ENCODE measurements at regions of chr6 and their contacts with region 1.

Region 1: DNA sequence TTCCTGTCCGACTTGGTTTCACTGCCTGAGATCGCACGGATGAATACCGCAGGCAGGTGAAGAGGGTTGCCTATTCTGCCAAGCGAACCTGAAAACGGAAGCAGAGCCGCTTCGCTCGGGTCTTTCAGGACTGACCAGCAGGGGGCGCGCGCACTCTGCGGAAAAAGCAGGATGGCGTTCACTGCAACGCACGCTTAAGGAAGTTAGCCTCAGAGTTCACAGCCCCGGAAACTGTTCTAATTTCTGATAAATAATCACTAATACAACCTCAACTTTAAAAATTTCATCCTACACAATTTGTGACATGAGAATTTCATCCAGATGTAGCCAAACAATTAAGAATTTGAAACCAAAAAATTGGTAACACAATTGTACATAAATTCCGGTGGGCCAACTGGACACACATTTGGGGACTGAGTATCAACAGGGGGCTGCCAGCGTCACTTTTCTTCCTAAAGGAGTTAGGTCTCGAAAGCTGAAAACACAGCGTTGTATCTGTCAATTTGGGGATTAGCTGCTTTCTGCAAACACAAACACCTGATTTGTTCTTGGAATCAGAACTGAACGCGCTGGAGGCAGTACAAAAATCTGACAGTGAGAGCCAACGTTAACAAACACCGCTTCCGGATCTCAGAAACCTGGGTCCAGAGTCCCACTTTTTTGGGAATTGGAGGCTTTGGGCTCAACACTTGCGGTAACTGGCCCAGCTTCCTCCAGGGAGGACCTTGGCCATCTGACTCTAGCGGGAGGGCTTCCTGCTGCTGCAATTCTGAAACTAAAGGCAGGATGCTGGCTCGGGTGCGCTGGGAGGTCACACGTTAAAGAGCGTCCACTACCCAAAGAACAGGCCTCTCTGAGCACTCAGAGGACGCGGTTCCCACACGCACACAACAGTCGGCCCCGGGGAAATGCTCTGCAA is 8.8 kb downstream of the PXDC1 start:
- DNase-seq: peak; percentile 86 to 91
- ATAC-seq: peak; percentile 63 to 89 (median 82)
- H3K4me3 ChIP-seq: peak overlapping the region in 8 of 10 donors; percentile 2 to 39 (median 22)
- H3K27ac ChIP-seq: peak overlapping the region; percentile 66 to 88 (median 77)
- H3K4me1 ChIP-seq: peaks cover 36 to 99% (median 71%) of the 10 kb centered on the region in 9 donors
- H3K27me3 ChIP-seq: no peaks in the 10 kb centered on the region
- CTCF ChIP-seq: peak; percentile 88 to 98 (median 95)

Region 2: DNA sequence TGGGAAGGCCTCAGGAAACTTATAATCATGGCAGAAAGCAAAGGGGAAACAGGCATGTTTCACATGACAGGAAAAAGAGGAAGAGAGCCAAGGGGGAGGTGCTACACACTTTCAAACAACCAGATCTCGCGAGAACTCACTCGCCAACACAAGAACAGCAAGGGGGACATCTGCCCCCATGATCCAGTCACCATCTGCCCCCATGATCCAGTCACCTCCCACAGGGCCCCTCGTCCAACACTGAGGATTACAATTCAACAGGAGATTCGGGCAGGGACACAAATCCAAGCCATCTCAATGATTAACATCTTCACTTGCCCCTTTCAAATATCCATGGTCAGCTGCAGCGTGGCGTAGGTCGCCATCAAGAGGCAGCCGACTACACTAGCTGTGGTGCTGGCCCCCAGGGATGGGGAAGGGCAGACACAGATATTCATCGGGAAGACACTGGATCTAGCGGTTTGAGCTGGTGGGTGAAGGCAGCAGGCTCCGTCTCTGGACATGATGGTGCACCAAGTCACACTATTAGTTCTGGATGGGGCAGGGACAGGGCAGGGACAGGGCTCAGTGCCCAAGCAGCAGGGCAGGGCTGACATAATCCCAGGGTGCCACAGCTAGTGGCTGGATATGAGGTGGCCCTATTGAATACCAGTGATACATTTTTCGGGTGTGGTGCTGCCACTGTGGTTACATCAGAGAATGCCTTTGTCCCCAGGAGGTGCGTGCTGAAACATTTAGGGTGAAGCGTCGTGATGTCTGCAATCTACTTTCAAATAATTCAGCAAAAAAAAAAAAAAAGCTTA is 546.8 kb before region 1 on chr6:
- intact Hi-C with region 1: no loop called
- DNase-seq: no peak
- ATAC-seq: peak in 3 of 8 donors; percentile 13 to 35 (median 21)
- H3K4me3 ChIP-seq: no peak overlapping the region
- H3K27ac ChIP-seq: peak overlapping the region in 3 of 10 donors; percentile 69 to 90 (median 81)
- H3K4me1 ChIP-seq: peaks cover 0 to 17% (median 6%) of the 10 kb centered on the region in 9 donors
- H3K27me3 ChIP-seq: no peaks in the 10 kb centered on the region
- CTCF ChIP-seq: no peak

Region 3: GRCh38 chr6:3697609-3698008 is 45.1 kb before region 1 on chr6:
- intact Hi-C with region 1: no loop called
- DNase-seq: no peak
- ATAC-seq: peak in 1 of 8 donors; percentile 77
- H3K4me3 ChIP-seq: no peak overlapping the region
- H3K27ac ChIP-seq: no peak overlapping the region
- H3K4me1 ChIP-seq: no peaks in the 10 kb centered on the region
- H3K27me3 ChIP-seq: no peaks in the 10 kb centered on the region
- CTCF ChIP-seq: no peak

Region 4: GRCh38 chr6:3825851-3826581 is 83.3 kb after region 1 on chr6:
- intact Hi-C with region 1: loop called in 5 of 10 experiments (anchors 2 to 5 kb)
- DNase-seq: peak; percentile 86 to 87
- ATAC-seq: peak; percentile 84 to 95 (median 93)
- H3K4me3 ChIP-seq: peak overlapping the region in 6 of 10 donors; percentile 8 to 36 (median 20)
- H3K27ac ChIP-seq: peak overlapping the region; percentile 75 to 92 (median 90)
- H3K4me1 ChIP-seq: peaks cover 10 to 44% (median 38%) of the 10 kb centered on the region in 9 donors
- H3K27me3 ChIP-seq: no peaks in the 10 kb centered on the region
- CTCF ChIP-seq: no peak

Region 5: DNA sequence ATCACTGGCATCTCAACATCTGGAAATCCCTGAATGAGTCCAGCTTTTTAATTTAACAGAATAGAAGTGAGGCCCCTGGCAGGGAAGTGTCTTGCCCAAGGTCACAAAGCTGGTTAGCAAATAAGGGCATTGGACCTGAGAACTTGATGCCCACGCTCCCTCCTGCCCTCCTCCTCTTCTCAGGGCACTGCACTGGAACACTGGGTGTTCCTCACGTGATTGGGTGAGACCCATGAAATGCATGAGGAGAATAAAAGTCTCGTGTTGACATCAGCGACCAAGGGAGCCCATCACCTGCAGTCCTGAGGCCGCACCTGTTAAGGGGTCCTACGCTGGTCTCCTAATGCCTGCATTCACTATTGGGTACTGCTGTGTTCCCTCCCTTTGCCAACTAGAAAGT is 113.9 kb after region 1 on chr6:
- intact Hi-C with region 1: no loop called
- DNase-seq: no peak
- ATAC-seq: no peak
- H3K4me3 ChIP-seq: no peak overlapping the region
- H3K27ac ChIP-seq: no peak overlapping the region
- H3K4me1 ChIP-seq: no peaks in the 10 kb centered on the region
- H3K27me3 ChIP-seq: no peaks in the 10 kb centered on the region
- CTCF ChIP-seq: no peak

Region 6: GRCh38 chr6:3887150-3887700 is 144.5 kb after region 1 on chr6:
- intact Hi-C with region 1: loop called in 9 of 10 experiments (anchors 1 to 5 kb)
- DNase-seq: peak in 1 of 2 donors; percentile 29
- ATAC-seq: peak in 7 of 8 donors; percentile 10 to 49 (median 37)
- H3K4me3 ChIP-seq: no peak overlapping the region
- H3K27ac ChIP-seq: peak overlapping the region in 1 of 10 donors; percentile 26
- H3K4me1 ChIP-seq: peaks cover 17 to 57% (median 34%) of the 10 kb centered on the region in 9 donors
- H3K27me3 ChIP-seq: no peaks in the 10 kb centered on the region
- CTCF ChIP-seq: peak; percentile 30 to 73 (median 57)

Region 7: DNA sequence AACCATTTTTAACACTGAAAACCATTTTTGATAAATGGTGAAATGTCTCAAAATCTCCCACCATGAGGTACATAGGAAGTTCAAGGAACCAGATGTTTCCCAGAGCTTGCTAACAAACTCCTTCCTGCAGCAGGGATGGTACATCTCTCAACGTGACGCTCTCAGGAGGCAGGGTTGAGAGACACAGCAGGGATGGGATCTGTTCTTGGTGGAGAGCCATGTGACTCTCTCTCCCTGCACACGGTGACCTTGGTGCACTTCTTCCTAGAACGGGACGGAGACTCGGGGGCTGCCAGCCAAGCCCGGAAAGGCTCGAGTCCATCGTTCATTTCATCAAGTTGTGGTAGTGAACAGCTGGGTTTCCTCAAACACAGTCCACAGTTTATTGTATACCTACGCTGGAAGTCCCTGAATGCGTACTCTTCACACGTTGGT is 200.7 kb after region 1 on chr6:
- intact Hi-C with region 1: loop called in 2 of 10 experiments (anchors 5 to 10 kb)
- DNase-seq: peak; percentile 43 to 49
- ATAC-seq: peak in 1 of 8 donors; percentile 14
- H3K4me3 ChIP-seq: no peak overlapping the region
- H3K27ac ChIP-seq: no peak overlapping the region
- H3K4me1 ChIP-seq: peaks cover 0 to 8% (median 0%) of the 10 kb centered on the region in 9 donors
- H3K27me3 ChIP-seq: peaks cover 0 to 31% (median 0%) of the 10 kb centered on the region in 7 donors
- CTCF ChIP-seq: no peak

Region 8: GRCh38 chr6:3990692-3991501 is 248.2 kb after region 1 on chr6:
- intact Hi-C with region 1: loop called in 9 of 10 experiments (anchors 1 to 10 kb)
- DNase-seq: peak; percentile 85 to 91
- ATAC-seq: peak; percentile 85 to 97 (median 95)
- H3K4me3 ChIP-seq: peak overlapping the region in 9 of 10 donors; percentile 37 to 57 (median 53)
- H3K27ac ChIP-seq: peak overlapping the region in 8 of 10 donors; percentile 49 to 74 (median 66)
- H3K4me1 ChIP-seq: peaks cover 0 to 25% (median 13%) of the 10 kb centered on the region in 9 donors
- H3K27me3 ChIP-seq: no peaks in the 10 kb centered on the region
- CTCF ChIP-seq: peak; percentile 68 to 94 (median 87)

Region 9: GRCh38 chr6:4155848-4156466 is 413.3 kb after region 1 on chr6:
- intact Hi-C with region 1: loop called in 2 of 10 experiments (anchors 5 to 10 kb)
- DNase-seq: peak in 1 of 2 donors; percentile 86
- ATAC-seq: peak; percentile 77 to 92 (median 86)
- H3K4me3 ChIP-seq: no peak overlapping the region
- H3K27ac ChIP-seq: no peak overlapping the region
- H3K4me1 ChIP-seq: peaks cover 0 to 4% (median 0%) of the 10 kb centered on the region in 9 donors
- H3K27me3 ChIP-seq: no peaks in the 10 kb centered on the region
- CTCF ChIP-seq: peak; percentile 80 to 93 (median 88)

Measured in heart right ventricle (tissue), 16 donors.